Gastrocnemius medialis (tissue), 4 donors: ENCODE measurements at regions of chr15 and their contacts with region 1.

Region 1: GRCh38 chr15:65610871-65611718 is at the start of gene INTS14:
- DNase-seq: peak; percentile 94 to 97
- ATAC-seq: peak; percentile 89 to 91
- H3K4me3 ChIP-seq: peak within 1 kb of the TSS; percentile 80 to 97 (median 87)
- H3K27ac ChIP-seq: peak within 1 kb of the TSS; percentile 89 to 96 (median 95)
- H3K4me1 ChIP-seq: peaks cover 25 to 29% of the 10 kb centered on the region in 2 donors
- H3K27me3 ChIP-seq: no peaks in the 10 kb centered on the region
- CTCF ChIP-seq: peak in 4 of 5 experiments; percentile 56 to 79 (median 74)
- POLR2A ChIP-seq: peak; percentile 79 to 82
- total RNA-seq, gene INTS14: 11.9 to 20.0 (median 14.8) TPM

Region 2: DNA sequence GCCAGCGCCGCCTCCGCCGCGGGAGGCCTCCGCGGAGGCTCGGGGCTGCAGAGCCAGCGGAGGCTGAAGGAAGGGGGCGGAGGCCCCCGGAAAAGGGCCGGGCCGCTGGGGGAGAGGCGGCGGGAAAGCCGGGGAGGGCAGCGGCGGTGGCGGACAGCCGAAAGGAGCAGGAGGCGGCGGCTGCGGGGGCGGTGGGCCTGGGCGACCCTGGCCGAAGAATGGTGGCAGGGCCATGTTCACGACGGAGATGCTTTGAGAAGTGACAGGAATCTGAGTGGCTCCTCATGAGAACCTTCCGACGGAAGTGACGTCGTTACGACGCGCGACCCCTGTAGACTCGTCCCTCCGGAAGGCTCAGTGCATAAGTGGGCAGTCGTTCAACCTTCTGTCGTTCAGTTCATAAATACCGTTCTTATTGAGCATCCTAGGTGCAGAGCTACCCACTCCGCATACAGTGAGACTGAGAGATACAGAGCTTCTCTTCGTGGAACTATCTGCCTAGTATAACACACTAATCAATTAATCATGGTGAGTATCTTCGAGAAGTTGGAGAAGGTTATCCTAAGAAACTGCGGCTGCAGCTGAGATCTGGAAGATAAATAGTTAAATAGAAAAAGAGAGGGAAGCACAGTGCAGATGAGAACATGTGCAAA is 477.4 kb before region 1 on chr15 and contains the start of gene PDCD7:
- in situ Hi-C with region 1: no loop called
- intact Hi-C with region 1: loop called (anchors 10 kb)
- DNase-seq: peak; percentile 75 to 81
- ATAC-seq: peak; percentile 97 to 99
- H3K4me3 ChIP-seq: peak within 1 kb of the TSS; percentile 69 to 93 (median 78)
- H3K27ac ChIP-seq: peak within 1 kb of the TSS; percentile 71 to 89 (median 88)
- H3K4me1 ChIP-seq: peaks cover 18 to 30% of the 10 kb centered on the region in 2 donors
- H3K27me3 ChIP-seq: no peaks in the 10 kb centered on the region
- CTCF ChIP-seq: no peak
- POLR2A ChIP-seq: peak; percentile 69 to 72
- total RNA-seq, gene PDCD7: 10.4 to 15.7 (median 12.4) TPM

Region 3: GRCh38 chr15:65304389-65305144 is 306.5 kb before region 1 on chr15 and contains the start of gene RNU5B-1:
- in situ Hi-C with region 1: no loop called
- intact Hi-C with region 1: loop called (anchors 10 kb)
- DNase-seq: peak; percentile 61 to 72
- ATAC-seq: peak; percentile 90 to 91
- H3K4me3 ChIP-seq: peak within 1 kb of the TSS; percentile 64 to 70 (median 67)
- H3K27ac ChIP-seq: peak within 1 kb of the TSS; percentile 87 to 95 (median 91)
- H3K4me1 ChIP-seq: peaks cover 7 to 8% of the 10 kb centered on the region in 2 donors
- H3K27me3 ChIP-seq: no peaks in the 10 kb centered on the region
- CTCF ChIP-seq: peak; percentile 75 to 90 (median 85)
- POLR2A ChIP-seq: peak; percentile 97 to 99
- total RNA-seq, gene RNU5B-1: not detected

Region 4: GRCh38 chr15:65516997-65517865 is 93.9 kb before region 1 on chr15 and contains the start of gene DPP8:
- in situ Hi-C with region 1: no loop called
- intact Hi-C with region 1: loop called (anchors 2 kb)
- DNase-seq: peak; percentile 87 to 90
- ATAC-seq: peak; percentile 95 to 97
- H3K4me3 ChIP-seq: peak within 1 kb of the TSS; percentile 95 to 100 (median 99)
- H3K27ac ChIP-seq: peak within 1 kb of the TSS; percentile 82 to 96 (median 96)
- H3K4me1 ChIP-seq: peaks cover 35 to 42% of the 10 kb centered on the region in 2 donors
- H3K27me3 ChIP-seq: no peaks in the 10 kb centered on the region
- CTCF ChIP-seq: peak; percentile 74 to 93 (median 79)
- POLR2A ChIP-seq: peak; percentile 39 to 64
- total RNA-seq, gene DPP8: 36.9 to 76.6 (median 48.0) TPM

Region 5: DNA sequence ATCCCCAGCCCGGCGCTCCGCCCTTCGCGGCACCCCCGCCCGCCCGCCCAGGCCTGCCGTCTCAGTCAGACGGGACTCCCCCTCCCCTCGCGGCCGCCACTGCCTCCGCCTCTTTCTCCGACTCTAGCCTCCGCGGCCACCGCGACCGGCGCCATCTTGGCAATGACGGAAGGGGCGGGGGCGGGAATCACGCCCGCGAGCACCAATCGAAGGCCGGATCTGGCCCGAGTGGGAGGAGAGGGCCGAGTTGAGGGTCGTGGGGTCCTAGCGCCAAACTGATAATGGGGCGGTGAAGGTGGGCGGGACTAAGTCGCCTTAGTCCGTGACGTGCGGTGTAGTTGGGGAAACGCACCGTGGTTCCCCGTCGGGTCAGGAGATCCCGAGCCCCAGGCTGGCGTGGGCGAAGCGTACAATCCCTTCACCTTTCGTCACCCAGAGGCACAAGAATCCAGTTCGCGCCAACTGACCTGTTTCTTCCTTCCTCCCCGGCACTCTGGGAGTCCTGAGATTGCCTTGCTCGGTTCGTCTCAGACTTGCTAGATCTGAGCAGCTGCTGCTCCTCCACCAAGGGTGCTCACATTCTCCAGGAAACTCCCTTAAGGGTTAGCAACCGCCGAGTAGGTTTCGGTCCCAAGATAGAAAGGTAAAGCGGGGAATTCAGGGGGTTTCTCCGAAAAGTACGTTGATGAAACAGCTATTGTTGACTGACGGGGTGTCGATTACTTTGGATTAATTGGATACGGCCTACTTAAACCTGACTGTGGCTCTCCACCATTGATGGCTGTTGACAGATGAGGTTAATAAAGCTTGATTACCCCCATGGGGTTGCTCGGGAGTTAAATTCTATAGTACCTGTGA is 181.3 kb after region 1 on chr15 and contains the start of gene DENND4A:
- in situ Hi-C with region 1: no loop called
- intact Hi-C with region 1: loop called (anchors 5 kb)
- DNase-seq: peak; percentile 94 to 98
- ATAC-seq: peak; percentile 92 to 94
- H3K4me3 ChIP-seq: peak within 1 kb of the TSS; percentile 68 to 100 (median 85)
- H3K27ac ChIP-seq: peak within 1 kb of the TSS; percentile 96 to 100 (median 98)
- H3K4me1 ChIP-seq: peaks cover 18 to 32% of the 10 kb centered on the region in 2 donors
- H3K27me3 ChIP-seq: no peaks in the 10 kb centered on the region
- CTCF ChIP-seq: no peak
- POLR2A ChIP-seq: peak; percentile 72 to 89
- total RNA-seq, gene DENND4A: 24.4 to 46.4 (median 33.1) TPM

Region 6: GRCh38 chr15:65824031-65824743 is 213.1 kb after region 1 on chr15:
- in situ Hi-C with region 1: no loop called
- intact Hi-C with region 1: no loop called
- DNase-seq: peak; percentile 35 to 53
- ATAC-seq: peak; percentile 88 to 90
- H3K4me3 ChIP-seq: no peak overlapping the region
- H3K27ac ChIP-seq: peak overlapping the region in 2 of 4 donors; percentile 5 to 10
- H3K4me1 ChIP-seq: peaks cover 0 to 6% of the 10 kb centered on the region in 2 donors
- H3K27me3 ChIP-seq: no peaks in the 10 kb centered on the region
- CTCF ChIP-seq: peak; percentile 43 to 74 (median 62)
- POLR2A ChIP-seq: no peak

Region 7: DNA sequence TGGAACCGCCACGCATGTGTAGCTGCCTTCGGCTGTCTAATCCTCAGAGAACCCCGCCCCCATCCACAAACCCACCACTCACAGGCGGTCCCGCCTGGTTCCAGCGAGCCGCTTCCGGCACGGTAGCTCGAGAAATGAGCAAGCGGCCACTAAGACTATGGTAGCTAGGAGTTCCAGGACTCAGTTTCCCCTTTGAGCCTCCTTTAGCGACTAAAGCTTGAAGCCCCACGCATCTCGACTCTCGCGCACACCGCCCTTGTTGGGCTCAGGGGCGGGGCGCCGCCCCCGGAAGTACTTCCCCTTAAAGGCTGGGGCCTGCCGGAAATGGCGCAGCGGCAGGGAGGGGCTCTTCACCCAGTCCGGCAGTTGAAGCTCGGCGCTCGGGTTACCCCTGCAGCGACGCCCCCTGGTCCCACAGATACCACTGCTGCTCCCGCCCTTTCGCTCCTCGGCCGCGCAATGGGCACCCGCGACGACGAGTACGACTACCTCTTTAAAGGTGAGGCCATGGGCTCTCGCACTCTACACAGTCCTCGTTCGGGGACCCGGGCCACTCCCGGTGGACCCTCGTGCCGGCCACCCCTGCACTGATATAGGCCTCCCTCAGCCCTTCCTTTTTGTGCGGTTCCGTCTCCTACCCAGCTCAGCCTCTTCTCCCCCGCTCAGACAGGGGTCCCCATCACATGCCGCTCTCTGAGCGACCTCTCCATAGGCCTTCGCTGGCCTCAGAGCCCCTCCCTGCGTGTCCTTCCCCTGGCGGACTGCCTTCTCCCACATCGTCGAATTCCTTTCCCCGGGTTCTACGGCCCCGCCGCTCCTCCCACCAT is 258.2 kb after region 1 on chr15 and contains the start of gene RAB11A:
- in situ Hi-C with region 1: no loop called
- intact Hi-C with region 1: loop called (anchors 1 kb)
- DNase-seq: peak; percentile 94 to 97
- ATAC-seq: peak; percentile 93 to 94
- H3K4me3 ChIP-seq: peak within 1 kb of the TSS; percentile 87 to 98 (median 88)
- H3K27ac ChIP-seq: peak within 1 kb of the TSS; percentile 92 to 100 (median 95)
- H3K4me1 ChIP-seq: peaks cover 17 to 23% of the 10 kb centered on the region in 2 donors
- H3K27me3 ChIP-seq: no peaks in the 10 kb centered on the region
- CTCF ChIP-seq: peak in 4 of 5 experiments; percentile 25 to 55 (median 40)
- POLR2A ChIP-seq: peak; percentile 95 to 98
- total RNA-seq, gene RAB11A: 93.0 to 207 (median 166) TPM